ENCODE measurements at regions of chr19 and their contacts with region 1.

Region 1: GRCh38 chr19:51367565-51368365 is 1.0 kb downstream of the CLDND2 start:
- DNase-seq: peak; percentile 92 to 100
- H3K4me3 ChIP-seq: peak overlapping the region; percentile 92
- H3K27ac ChIP-seq: no peak overlapping the region
- H3K4me1 ChIP-seq: peaks cover 31% of the 10 kb centered on the region
- H3K27me3 ChIP-seq: peaks cover 25% of the 10 kb centered on the region
- CTCF ChIP-seq: no peak

Region 2: DNA sequence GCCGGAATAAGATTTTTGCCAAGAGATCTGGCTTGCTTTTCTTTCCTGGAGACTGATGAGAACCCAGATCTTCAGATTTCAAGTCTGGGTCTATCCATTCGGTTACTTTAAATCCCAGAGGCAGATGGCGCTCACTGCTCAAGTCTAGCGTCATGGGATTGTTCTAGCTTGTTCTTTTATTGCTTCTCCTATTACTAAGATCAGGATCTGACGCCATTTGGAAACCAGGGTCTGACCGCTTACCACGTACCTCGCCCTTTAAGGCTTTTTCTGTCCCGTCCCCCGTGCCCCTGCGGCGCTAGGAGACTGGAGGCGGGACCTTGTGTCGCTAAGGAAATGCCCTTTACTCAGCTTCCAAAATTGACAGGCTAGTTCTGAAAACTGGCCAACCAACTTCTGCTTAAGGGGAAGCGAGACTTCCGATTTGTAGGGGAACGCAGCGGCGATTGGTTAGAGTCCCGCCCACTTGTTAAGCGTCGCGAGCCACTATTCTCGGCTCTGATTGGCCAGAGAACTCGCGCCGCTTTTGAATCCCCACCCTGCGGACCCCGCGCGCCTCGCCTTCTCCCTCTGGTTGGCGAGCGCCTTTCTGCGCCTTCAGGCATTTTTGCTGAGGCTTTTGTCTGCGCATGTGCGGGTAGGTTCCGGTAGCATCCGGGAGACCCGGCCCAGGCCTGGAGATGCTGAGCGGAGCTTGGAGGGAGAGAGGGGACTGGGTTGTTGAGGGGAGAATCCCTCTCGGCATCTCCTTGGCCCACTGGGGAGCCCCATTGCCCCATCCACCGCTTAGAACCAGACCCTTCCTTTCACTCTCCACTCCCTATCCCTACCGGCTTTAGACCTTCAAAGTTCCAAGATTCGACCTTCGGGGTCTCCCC is 26.4 kb after region 1 on chr19:
- CTCF ChIA-PET with region 1: no interaction called
- POLR2A ChIA-PET with region 1: interaction called, 6 read pairs
- intact Hi-C with region 1: loop called (anchors 1 kb)
- DNase-seq: peak; percentile 94 to 99
- H3K4me3 ChIP-seq: peak overlapping the region; percentile 62
- H3K27ac ChIP-seq: no peak overlapping the region
- H3K4me1 ChIP-seq: peaks cover 10% of the 10 kb centered on the region
- H3K27me3 ChIP-seq: no peaks in the 10 kb centered on the region
- CTCF ChIP-seq: no peak

Region 3: DNA sequence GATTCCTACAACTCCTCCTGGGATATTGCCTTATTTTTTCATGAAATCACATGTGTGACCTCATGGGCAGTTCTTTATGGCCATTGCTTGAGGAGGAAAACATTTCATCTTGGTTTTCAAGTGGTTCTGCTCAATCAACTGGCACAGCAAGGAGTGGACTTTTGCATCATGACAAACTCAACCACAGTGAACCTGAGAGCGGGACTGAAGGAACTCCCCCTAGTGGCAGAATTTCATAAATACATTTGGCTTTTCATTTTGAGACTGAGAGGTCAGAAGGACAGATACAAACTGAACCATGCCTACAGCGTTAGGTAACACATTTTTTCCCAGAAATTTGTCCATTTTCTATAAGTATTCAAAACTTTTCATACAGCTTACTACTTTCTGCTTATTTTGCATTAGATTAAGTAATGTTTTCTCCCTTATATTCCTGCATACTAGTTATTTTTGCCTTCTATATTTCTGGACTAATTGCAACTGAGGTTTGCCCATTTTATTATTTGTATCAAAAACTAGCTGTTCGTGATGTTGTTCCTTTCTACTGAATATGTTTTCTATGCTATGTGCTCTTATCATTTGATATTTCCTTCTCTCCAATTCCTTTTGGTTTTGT is 147.2 kb after region 1 on chr19:
- CTCF ChIA-PET with region 1: interaction called, 4 read pairs
- POLR2A ChIA-PET with region 1: no interaction called
- intact Hi-C with region 1: loop called (anchors 1 kb)
- DNase-seq: no peak
- H3K4me3 ChIP-seq: no peak overlapping the region
- H3K27ac ChIP-seq: no peak overlapping the region
- H3K4me1 ChIP-seq: no peaks in the 10 kb centered on the region
- H3K27me3 ChIP-seq: peaks cover 28% of the 10 kb centered on the region; the same call in 1 of the 2 replicates
- CTCF ChIP-seq: peak; percentile 89

Region 4: DNA sequence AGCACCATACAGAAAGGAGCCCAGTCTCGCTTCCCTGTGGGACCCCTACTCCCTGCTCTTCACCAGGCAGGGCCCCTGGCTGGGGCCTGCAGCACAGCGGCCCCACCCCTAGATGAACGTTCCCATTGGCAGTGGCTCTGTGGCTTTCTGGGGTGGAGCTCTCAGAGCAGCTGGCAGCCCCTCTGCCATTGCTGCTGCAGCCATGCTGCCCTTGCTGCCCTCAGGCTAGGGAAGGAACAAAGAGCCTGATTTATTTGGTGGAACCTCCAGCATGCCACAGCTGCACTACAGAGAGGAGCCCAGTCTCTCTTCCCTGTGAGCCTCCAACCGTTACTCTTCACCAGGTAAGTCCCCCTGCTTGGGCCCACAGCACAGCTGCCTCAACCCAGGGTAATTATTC is 157.9 kb after region 1 on chr19:
- CTCF ChIA-PET with region 1: no interaction called
- POLR2A ChIA-PET with region 1: no interaction called
- intact Hi-C with region 1: no loop called
- DNase-seq: no peak
- H3K4me3 ChIP-seq: no peak overlapping the region
- H3K27ac ChIP-seq: no peak overlapping the region
- H3K4me1 ChIP-seq: no peaks in the 10 kb centered on the region
- H3K27me3 ChIP-seq: peaks cover 96% of the 10 kb centered on the region
- CTCF ChIP-seq: no peak

Region 5: DNA sequence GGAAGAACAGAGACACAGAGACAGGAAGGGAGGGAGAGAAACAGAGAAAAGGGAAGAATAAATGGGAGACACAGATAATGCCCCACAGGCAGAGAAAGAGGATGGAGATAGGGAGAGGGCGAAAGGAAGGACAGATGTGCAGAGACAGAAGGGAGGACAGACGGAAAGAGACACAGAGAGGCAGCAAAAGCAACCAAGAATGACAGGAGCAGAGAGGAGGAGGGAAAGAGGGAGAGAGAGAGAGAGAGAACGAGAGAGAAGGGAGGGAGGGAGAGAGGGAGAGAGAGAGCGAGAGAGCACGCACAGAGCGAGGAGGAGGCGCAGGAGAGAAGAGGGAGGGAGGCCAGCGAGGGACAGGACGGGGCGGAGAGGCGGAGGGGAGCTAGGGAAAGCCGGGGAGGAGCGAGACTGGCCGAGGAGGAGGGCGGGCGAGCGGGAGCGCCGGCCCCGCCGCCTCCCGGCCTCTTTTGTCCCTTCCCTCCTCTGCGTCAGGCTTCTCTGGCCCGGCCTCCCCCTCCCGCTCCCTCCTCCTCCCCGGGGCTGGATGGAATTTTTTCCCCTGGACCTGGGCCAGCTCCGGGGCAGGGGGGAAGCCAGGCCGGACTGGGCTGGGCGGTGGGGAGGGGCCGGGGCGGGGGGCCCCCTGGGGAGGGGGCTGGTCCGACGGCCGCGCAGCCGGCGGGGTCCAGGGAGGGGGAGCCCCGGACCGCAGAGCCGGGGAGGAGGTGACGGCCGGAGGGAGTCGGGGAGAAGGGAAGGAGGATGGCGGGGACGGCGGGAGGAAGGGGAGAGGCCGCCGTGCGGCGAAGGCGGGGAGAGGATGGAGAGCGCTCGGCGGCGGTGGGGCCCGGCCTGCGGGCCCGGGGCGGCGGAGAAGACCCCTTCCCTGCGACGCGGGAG is 321.2 kb after region 1 on chr19:
- CTCF ChIA-PET with region 1: no interaction called
- POLR2A ChIA-PET with region 1: interaction called, 6 read pairs
- intact Hi-C with region 1: loop called (anchors 10 kb)
- DNase-seq: peak; percentile 72 to 96
- H3K4me3 ChIP-seq: peak overlapping the region; percentile 89
- H3K27ac ChIP-seq: no peak overlapping the region; the same call in 1 of the 2 replicates
- H3K4me1 ChIP-seq: peaks cover 29% of the 10 kb centered on the region
- H3K27me3 ChIP-seq: no peaks in the 10 kb centered on the region
- CTCF ChIP-seq: peak; percentile 33; the same call in 1 of the 2 replicates

Region 6: DNA sequence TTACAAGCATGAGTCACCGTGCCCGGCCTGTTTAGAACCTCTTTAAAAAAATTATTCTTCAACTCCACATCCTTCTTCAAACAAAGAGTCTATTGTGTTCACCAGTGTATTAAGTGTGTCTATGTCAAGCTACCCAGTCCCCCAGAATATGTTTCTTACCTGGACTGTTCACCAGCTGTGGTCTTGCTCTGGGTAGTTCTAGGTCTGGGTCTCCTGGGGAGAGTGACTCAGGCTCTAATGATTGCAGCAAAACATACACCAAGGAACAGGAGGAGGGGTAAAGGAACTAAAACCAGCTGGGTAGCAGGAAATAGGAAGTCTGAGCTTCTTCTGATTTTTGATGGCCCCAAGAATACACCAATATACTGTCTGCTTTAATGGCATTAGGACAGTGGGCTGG is 383.9 kb after region 1 on chr19 and contains the start of gene FPR1:
- CTCF ChIA-PET with region 1: no interaction called
- POLR2A ChIA-PET with region 1: no interaction called
- intact Hi-C with region 1: no loop called
- DNase-seq: peak in 1 of 2 experiments; percentile 40
- H3K4me3 ChIP-seq: no peak within 1 kb of the TSS
- H3K27ac ChIP-seq: no peak within 1 kb of the TSS
- H3K4me1 ChIP-seq: no peaks in the 10 kb centered on the region
- H3K27me3 ChIP-seq: peaks cover 79% of the 10 kb centered on the region
- CTCF ChIP-seq: no peak
- total RNA-seq, gene FPR1: not detected in 2 replicates